ENCODE measurements at regions of chr1 and their contacts with region 1.

Region 1: GRCh38 chr1:226634166-226634588 is 85.6 kb downstream of the STUM start:
- DNase-seq: peak; percentile 96
- H3K4me3 ChIP-seq: no peak overlapping the region
- H3K27ac ChIP-seq: peak overlapping the region in 7 of 8 donors; percentile 46 to 86 (median 79)
- H3K4me1 ChIP-seq: peaks cover 19 to 79% (median 57%) of the 10 kb centered on the region in 6 donors
- H3K27me3 ChIP-seq: no peaks in the 10 kb centered on the region
- CTCF ChIP-seq: peak; percentile 87 to 96 (median 92)
- POLR2A ChIP-seq: no peak

Region 2: DNA sequence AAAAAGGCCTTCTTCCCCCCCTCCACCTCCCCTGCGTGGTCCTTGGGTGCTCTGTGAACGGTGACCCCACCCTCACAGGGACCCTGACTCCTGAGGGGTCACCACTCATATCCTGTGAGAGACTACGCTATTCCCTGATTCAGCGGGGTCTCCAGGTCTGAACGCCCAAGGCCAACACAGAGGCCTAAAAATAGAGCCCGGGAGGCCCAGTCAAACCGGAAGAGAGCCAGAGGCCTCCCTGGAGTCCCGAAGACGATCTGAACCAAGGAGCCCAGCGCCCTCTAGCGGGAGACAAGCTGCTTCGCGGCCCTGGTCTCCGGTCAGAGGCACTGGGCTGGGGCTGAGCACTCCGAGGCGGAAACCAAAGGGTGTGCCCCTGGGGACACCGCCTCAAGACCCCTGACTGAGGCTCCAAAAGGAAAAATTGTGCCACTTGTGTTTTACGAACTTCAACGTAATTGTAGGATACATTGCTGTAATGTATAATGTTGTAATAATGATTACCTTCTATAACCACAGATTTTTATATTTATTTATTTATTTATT is 193.9 kb after region 1 on chr1:
- intact Hi-C with region 1: loop called (anchors 5 kb)
- DNase-seq: peak; percentile 99
- H3K4me3 ChIP-seq: peak overlapping the region in 2 of 8 donors; percentile 8 to 22
- H3K27ac ChIP-seq: peak overlapping the region; percentile 57 to 83 (median 78)
- H3K4me1 ChIP-seq: peaks cover 5 to 22% (median 17%) of the 10 kb centered on the region in 6 donors
- H3K27me3 ChIP-seq: no peaks in the 10 kb centered on the region
- CTCF ChIP-seq: peak; percentile 91 to 98 (median 96)
- POLR2A ChIP-seq: no peak

Measured in spleen (tissue), 13 donors.